ENCODE measurements at regions of chr20 and their contacts with region 1.

Region 1: GRCh38 chr20:54691327-54691726 is 215.9 kb downstream of the DOK5 start:
- DNase-seq: no peak
- ATAC-seq: no peak
- H3K4me3 ChIP-seq: no peak overlapping the region
- H3K27ac ChIP-seq: no peak overlapping the region
- H3K4me1 ChIP-seq: no peaks in the 10 kb centered on the region
- H3K27me3 ChIP-seq: 0 out of 2 replicates have a peak, but pooled peaks cover 2% of the 10 kb centered on the region
- CTCF ChIP-seq: no peak

Region 2: DNA sequence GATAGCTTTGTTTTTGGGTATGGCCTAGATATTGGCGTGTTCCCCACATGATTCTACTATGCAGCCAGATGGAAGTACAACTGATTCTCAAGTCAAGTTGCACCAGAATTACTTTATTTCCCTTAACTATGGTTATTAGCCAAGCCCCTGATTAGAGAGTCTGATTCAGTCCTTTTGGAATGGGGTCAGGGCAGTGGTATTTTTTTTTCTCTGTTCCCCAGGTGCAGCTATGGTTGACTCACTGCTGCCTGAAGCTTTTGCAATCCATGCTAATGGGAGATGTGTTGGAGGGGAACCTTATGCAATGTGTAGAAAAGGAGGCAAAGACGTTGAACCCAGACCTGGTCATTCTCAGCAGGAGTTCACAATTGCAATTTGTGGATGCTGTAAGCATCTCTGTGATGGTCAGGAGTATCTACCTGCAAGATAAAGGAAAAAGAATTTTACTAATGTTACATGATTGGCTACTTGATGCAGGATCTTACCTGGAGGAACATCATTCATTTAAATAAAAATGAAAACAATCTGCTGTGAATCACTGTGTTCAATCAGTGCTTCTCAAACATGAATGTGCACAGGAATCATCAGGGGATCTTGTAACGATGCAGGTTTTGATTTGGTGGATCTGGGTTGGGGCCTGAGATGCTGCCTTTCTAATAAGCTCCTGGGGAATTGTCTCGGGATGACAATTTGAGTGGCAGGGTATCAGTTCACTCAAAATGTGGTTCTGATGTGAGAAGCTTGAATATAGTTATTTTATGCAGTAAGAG is 434.1 kb before region 1 on chr20:
- CTCF ChIA-PET with region 1: no interaction called
- POLR2A ChIA-PET with region 1: no interaction called
- in situ Hi-C with region 1: no loop called
- intact Hi-C with region 1: no loop called
- DNase-seq: no peak
- ATAC-seq: no peak
- H3K4me3 ChIP-seq: no peak overlapping the region
- H3K27ac ChIP-seq: no peak overlapping the region
- H3K4me1 ChIP-seq: no peaks in the 10 kb centered on the region
- H3K27me3 ChIP-seq: no peaks in the 10 kb centered on the region
- CTCF ChIP-seq: no peak

Region 3: DNA sequence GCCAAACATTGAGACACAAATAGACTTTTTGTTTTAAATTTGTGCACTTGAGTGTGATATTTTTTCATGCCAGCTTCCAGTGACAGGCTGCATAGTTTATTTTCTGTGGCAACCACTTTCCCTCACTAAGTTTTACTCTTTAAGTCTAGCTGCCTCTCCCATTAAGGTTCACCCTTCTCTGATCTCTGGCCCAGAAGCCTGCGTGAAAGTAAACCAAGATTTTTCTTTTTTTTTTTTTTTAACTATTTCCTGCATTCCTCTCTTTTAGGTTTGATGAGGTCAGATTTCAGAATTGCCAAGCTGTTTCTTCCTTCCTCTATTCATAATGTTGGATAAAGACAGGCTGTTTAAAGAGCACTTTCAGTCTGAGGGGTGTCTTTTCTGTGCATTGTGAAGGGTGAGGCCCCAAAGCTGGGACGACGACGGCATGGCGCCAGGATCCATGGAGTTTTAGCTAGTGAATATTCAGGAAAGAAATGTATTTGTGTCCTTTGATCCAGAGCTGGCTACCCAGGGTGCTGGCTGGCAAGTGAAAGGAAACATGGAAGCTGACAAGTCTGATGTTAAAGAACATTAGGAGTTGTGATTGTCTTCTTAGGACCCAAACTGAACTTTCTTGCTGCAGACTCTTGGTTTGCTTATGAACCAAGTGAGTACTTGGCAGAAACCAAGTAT is 165.3 kb before region 1 on chr20:
- CTCF ChIA-PET with region 1: no interaction called
- POLR2A ChIA-PET with region 1: interaction called, 13 read pairs
- in situ Hi-C with region 1: no loop called
- intact Hi-C with region 1: no loop called
- DNase-seq: no peak
- ATAC-seq: no peak
- H3K4me3 ChIP-seq: no peak overlapping the region
- H3K27ac ChIP-seq: no peak overlapping the region
- H3K4me1 ChIP-seq: no peaks in the 10 kb centered on the region
- H3K27me3 ChIP-seq: peaks cover 2% of the 10 kb centered on the region
- CTCF ChIP-seq: no peak